PC-3 (cell line): ENCODE measurements at regions of chr2 and their contacts with region 1.

Region 1: GRCh38 chr2:73176881-73177644 is 25.3 kb upstream of the NOTO start:
- DNase-seq: peak; percentile 85
- ATAC-seq: peak; percentile 82
- H3K4me3 ChIP-seq: peak overlapping the region; percentile 75
- H3K27ac ChIP-seq: no peak overlapping the region
- H3K4me1 ChIP-seq: peaks cover 22% of the 10 kb centered on the region
- H3K27me3 ChIP-seq: peaks cover 27% of the 10 kb centered on the region
- CTCF ChIP-seq: peak; percentile 98

Region 2: DNA sequence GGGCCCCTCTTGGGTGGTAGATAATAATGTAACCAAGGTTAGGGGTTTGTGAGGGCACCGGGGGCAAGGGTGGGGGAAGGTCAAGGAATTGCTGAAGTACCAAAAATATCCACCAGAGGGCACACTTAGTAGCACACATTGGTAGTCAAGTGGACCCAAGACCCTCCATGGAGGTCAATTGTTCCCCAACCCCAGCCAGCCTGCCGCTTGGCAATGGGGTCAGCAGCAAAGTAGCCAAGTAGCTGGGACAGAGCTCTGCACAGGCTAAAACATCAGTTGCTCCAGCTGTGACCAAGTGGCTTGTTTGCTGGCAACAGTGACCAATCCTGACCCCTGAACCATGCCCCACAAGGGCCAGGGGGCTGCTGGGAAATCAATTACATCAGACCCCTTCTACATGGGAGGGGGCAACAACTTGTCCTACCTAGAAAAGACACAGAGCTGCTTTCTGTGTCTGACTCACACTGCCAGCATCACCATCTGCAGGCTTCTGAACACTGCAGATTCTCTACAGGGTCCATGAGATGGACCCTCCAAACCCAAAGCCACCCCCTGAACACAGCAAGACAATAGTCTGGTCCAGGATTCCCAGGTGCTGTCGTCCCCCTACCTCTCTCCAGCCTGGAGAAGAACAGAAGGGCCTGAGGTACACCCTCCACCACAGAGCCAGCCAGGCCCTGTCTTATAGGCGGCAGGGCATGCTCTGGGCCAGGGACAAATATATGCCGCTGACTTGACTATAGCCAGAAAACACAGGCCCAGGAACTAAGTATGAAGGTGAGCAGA is 183.7 kb before region 1 on chr2:
- CTCF ChIA-PET with region 1: no interaction called
- POLR2A ChIA-PET with region 1: interaction called, 3 read pairs
- intact Hi-C with region 1: loop called (anchors 5 kb)
- DNase-seq: peak; percentile 64
- ATAC-seq: peak; percentile 55; the same call in 1 of the 2 replicates
- H3K4me3 ChIP-seq: no peak overlapping the region
- H3K27ac ChIP-seq: no peak overlapping the region
- H3K4me1 ChIP-seq: no peaks in the 10 kb centered on the region
- H3K27me3 ChIP-seq: no peaks in the 10 kb centered on the region
- CTCF ChIP-seq: peak; percentile 88

Region 3: DNA sequence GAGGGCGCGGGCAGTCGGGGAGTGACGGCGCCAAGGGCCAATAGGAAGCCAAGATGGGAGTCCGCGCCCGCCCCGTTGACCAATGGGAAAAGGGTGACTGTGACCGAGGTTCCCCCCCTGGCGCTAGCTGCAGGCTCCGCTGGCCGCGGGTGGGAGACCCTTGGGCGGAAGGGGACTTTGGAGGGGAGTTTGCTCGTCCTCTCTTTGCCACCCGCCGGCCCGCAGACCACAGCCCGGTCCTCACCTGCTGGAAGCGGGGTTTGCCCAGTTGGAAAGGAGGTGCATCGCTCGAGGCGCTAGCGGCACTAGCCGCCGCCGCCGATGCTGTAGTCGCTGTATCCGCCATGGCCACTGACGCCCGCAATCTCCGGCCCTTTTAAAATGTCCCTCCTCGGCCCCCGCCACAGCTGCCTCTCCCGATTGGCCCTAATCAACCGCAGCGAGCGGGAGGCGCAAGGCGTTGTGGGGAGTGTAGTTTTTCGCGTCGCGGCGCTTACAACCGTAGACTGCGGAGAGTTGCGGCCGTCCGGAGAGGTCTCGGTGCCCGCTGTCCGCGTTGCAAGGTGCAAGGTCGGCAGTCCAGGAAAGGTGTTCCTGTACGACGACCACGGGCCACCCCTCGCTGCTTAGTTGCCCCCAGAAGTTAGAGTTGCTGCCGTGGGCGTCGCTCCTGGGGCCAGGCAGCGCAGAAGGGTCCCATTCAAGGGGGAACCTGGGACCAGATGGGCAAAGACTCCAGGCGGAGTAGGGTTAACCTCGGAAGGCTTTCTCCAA is 105.5 kb before region 1 on chr2 and contains the start of gene SFXN5:
- CTCF ChIA-PET with region 1: no interaction called
- POLR2A ChIA-PET with region 1: no interaction called
- intact Hi-C with region 1: loop called (anchors 5 kb)
- DNase-seq: peak; percentile 94
- ATAC-seq: peak; percentile 91
- H3K4me3 ChIP-seq: peak within 1 kb of the TSS; percentile 99
- H3K27ac ChIP-seq: peak within 1 kb of the TSS; percentile 63
- H3K4me1 ChIP-seq: peaks cover 22% of the 10 kb centered on the region
- H3K27me3 ChIP-seq: no peaks in the 10 kb centered on the region
- CTCF ChIP-seq: no peak
- total RNA-seq, gene SFXN5: 22.0 and 30.7 TPM in 2 replicates

Region 4: GRCh38 chr2:73112913-73113633 is 64.0 kb before region 1 on chr2 and contains the start of gene RAB11FIP5:
- CTCF ChIA-PET with region 1: no interaction called
- POLR2A ChIA-PET with region 1: no interaction called
- intact Hi-C with region 1: loop called (anchors 2 kb)
- DNase-seq: peak; percentile 84
- ATAC-seq: peak; percentile 66
- H3K4me3 ChIP-seq: peak within 1 kb of the TSS; percentile 87
- H3K27ac ChIP-seq: peak within 1 kb of the TSS; percentile 82
- H3K4me1 ChIP-seq: peaks cover 18% of the 10 kb centered on the region
- H3K27me3 ChIP-seq: no peaks in the 10 kb centered on the region
- CTCF ChIP-seq: no peak
- total RNA-seq, gene RAB11FIP5: 26.6 and 36.9 TPM in 2 replicates

Region 5: GRCh38 chr2:73212448-73213176 is 35.5 kb after region 1 on chr2:
- CTCF ChIA-PET with region 1: interaction called, 16 read pairs
- POLR2A ChIA-PET with region 1: no interaction called
- intact Hi-C with region 1: loop called (anchors 1 kb)
- DNase-seq: peak; percentile 76
- ATAC-seq: peak; percentile 80
- H3K4me3 ChIP-seq: no peak overlapping the region
- H3K27ac ChIP-seq: no peak overlapping the region
- H3K4me1 ChIP-seq: peaks cover 15% of the 10 kb centered on the region
- H3K27me3 ChIP-seq: no peaks in the 10 kb centered on the region
- CTCF ChIP-seq: peak; percentile 90

Region 6: GRCh38 chr2:73594251-73594650 is 417.2 kb after region 1 on chr2:
- CTCF ChIA-PET with region 1: no interaction called
- POLR2A ChIA-PET with region 1: no interaction called
- intact Hi-C with region 1: no loop called
- DNase-seq: peak; percentile 38
- ATAC-seq: peak; percentile 84
- H3K4me3 ChIP-seq: no peak overlapping the region
- H3K27ac ChIP-seq: no peak overlapping the region
- H3K4me1 ChIP-seq: peaks cover 9% of the 10 kb centered on the region; the same call in 1 of the 2 replicates
- H3K27me3 ChIP-seq: no peaks in the 10 kb centered on the region
- CTCF ChIP-seq: no peak